ENCODE measurements at regions of chr17 and their contacts with region 1.

Region 1: DNA sequence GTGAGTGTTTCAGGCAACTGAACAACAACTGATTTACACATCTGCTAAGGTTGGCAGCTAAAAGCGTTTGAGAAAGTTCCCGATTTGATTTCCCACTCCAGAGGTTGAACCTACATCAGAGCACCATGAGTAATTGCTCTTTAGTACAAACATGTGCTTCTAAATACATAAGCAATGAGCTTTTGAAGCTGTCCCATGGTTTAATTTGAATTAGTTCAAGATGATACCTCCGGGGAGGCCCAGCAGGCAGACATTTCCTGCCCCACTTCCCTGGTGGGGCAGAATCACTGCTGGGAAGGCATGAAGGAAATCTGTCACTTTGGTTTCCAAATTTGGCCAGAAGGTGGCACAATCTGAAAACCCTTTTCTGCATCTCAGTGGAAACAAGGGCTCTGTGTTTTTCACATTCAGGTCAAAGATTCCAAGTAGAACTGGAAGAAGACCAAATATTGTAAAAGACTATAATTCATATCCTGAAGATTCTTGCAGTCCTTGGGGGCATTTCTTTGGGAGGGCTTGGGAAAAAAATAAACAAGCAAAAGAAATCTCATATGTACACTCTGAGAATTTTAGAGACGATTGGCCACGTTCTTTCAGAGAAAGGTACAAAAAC is 176.2 kb upstream of the FAM20A start:
- DNase-seq: no peak
- H3K4me3 ChIP-seq: no peak overlapping the region
- CTCF ChIP-seq: peak; percentile 72

Region 2: DNA sequence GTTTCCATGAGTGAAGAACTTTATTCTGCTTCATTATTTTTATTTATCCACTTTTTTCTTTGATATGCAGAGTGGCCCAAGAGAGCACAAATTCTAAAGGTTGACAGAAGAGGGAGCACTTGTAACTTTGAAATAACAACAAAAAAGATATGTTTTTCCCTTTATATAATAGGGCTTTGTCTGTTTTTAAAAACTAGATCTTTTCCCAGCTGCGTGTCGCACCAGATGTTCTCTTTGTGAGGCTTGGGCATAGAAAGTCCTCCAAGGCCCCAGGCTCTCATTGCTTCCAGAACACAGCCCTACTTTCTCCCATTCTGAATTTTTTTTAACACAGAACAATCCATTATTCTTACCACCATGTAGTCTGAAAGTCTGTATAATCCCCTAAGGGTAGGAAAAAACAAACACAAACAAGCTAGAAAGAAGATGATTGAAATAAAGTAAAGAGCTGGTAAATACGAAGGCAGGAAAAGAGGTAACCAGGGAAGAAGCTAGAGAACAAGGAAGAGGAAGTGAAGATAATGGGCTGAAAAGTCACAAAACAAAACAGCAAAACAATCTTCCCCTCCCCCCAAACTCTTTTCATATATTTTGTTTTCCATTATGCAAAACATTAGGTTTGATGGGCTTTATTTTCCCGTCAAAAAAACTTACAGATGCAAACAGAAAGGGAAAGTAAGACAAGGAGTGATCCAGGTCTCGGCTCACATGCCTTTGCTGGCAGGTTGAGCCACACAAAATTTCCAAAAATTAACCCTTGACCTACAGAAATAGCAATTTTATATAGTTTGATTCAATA is 17.5 kb after region 1 on chr17:
- CTCF ChIA-PET with region 1: interaction called, 77 read pairs
- POLR2A ChIA-PET with region 1: no interaction called
- DNase-seq: no peak
- H3K4me3 ChIP-seq: no peak overlapping the region
- CTCF ChIP-seq: peak; percentile 9

Region 3: DNA sequence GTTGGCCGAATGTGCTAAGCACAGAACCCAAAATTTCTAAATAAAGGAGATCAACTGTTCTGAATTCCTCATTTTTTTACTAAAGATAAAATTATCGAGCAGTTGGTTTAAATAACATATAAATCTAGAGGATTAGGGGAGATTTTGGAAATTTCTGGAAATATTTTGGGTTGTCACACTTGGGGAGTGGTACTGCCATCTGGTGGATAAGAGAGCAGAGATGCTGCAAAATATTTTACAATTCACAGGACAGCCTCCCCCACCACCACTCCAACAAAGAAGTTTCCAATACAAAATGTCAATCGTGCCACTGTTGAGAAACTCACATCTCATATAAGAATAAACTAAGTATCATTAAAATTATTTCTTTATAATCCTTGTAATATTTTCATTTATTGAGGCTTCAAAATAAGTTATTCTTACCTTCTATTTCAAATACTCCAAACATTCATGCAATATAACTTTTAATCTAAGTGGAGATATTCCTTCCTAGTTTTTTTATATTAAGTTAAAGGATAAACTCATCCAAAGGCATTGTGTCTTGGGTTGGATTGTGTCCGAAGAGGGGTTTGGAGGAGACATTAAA is 194.9 kb after region 1 on chr17:
- CTCF ChIA-PET with region 1: interaction called, 38 read pairs
- POLR2A ChIA-PET with region 1: no interaction called
- DNase-seq: no peak
- H3K4me3 ChIP-seq: no peak overlapping the region
- CTCF ChIP-seq: peak; percentile 59